ENCODE measurements at regions of chr14 and their contacts with region 1.

Region 1: DNA sequence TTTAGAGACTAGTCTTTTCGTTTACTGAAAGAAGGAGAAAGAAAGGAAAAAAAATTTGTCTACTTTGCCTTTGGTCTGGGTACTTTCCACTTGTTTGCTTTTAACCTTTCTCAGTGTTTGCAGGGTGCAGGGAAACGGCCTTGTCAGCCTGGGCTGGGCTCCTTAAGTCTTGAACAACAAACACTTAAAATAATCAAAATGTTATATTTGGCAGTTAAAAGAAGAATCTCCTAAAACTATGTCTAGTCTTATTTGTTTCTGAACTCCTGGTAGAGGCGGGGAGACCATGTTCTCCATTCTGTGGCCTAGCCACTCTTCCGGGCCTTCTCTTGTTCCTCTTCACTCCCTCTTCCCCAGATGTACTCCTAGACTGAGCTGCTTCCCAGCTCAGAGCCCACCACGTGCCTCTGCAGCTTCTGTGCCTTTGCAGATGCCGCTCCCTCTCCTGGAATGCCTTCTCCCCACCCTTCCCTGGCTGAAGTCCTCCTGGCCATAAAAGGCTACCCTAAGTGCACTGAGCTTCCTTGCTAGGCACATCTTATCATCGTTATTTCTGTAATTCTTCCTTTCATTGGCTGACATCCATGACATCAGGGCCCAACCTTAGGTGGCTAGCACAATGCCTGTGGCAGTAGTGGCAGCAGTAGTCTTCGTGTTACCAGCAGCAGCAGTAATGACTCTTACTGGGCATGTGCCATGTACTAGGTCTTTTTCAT is 432.9 kb downstream of the ZFP36L1 start:
- DNase-seq: peak; percentile 28
- ATAC-seq: peak; percentile 62
- H3K4me3 ChIP-seq: no peak overlapping the region
- H3K27ac ChIP-seq: no peak overlapping the region
- H3K4me1 ChIP-seq: peaks cover 29% of the 10 kb centered on the region
- H3K27me3 ChIP-seq: no peaks in the 10 kb centered on the region
- CTCF ChIP-seq: no peak

Region 2: DNA sequence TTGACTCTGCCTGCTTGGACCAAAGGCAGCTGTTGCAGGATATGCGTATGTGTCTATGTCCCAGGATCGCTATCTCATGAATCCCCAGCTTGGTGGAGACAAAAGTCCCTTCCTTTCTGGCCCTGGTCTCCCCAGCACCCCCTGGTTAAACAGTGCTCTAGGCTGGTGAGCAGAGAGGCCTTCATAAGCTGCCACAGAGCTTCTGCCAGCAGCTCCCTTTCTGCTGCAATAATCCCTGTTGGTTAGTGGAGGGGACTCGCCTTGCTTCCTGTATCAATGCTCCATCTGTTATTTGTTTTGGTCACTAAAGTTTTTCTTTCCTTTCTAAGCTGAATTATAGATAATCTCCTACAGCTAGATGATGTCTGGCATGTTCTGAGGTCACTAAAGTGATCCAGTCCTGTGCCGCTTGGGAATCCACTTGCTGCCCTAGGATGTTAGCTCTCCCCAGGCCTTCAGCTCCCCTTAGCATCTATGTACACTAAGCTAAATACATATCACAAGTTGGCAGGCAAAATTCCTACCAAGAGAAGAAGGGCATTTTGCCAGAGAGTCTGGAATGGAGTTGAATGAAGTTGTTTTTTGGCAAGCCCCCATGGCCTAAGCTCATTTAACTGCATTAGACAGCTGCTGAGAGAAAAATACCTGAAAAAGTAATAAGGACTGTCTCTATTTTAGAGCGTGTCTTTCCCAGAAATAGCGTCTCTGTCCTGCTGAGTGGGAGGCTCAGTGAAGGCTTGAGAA is 610.5 kb before region 1 on chr14:
- CTCF ChIA-PET with region 1: no interaction called
- POLR2A ChIA-PET with region 1: interaction called, 10 read pairs
- intact Hi-C with region 1: no loop called
- DNase-seq: no peak
- ATAC-seq: no peak
- H3K4me3 ChIP-seq: no peak overlapping the region
- H3K27ac ChIP-seq: no peak overlapping the region
- H3K4me1 ChIP-seq: no peaks in the 10 kb centered on the region
- H3K27me3 ChIP-seq: no peaks in the 10 kb centered on the region
- CTCF ChIP-seq: no peak

Region 3: DNA sequence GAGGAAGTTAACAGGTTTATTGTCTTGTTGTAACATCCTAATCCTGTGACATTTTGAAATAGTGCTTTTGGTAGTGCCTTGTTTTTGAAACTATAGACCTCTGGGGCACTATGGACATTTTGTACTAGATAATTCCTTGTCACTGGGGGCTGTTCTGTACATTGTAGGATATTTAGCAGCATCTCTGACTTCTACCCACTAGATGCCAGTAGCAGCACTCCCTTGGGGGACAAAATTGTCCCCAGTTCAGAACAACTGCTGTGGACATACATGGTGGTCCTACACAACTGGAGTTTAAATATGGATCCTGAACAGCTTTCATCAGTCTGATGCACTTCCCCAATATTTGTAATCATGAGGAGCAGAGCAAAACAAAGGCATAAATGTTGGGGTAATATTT is 275.7 kb before region 1 on chr14:
- CTCF ChIA-PET with region 1: no interaction called
- POLR2A ChIA-PET with region 1: no interaction called
- intact Hi-C with region 1: loop called (anchors 10 kb)
- DNase-seq: peak; percentile 37
- ATAC-seq: peak; percentile 48
- H3K4me3 ChIP-seq: no peak overlapping the region
- H3K27ac ChIP-seq: no peak overlapping the region
- H3K4me1 ChIP-seq: no peaks in the 10 kb centered on the region
- H3K27me3 ChIP-seq: no peaks in the 10 kb centered on the region
- CTCF ChIP-seq: peak; percentile 71

Measured in PC-3 (cell line).